ENCODE measurements at regions of chr7 and their contacts with region 1.

Region 1: DNA sequence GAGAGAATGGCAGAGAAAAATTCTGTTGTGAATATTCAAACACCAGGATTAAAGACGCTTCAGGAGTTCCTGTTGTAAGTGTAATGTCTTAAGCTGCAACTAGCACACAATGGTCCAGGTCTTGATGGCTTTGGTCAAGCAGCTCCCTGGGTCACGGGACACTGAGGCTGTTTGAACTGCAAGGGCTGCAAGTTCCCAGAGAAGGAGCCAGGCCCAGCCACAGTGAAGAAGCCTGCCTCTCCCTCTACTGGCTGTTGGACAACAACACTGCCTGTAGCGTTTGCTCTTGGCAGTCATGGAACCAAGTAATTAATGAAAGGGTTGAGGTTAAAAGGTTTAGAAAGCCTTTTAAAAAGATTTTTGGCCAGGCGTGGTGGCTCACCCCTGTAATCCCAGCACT is 31.9 kb upstream of the GUSB start:
- DNase-seq: peak; percentile 59
- H3K4me3 ChIP-seq: no peak overlapping the region
- H3K27ac ChIP-seq: no peak overlapping the region
- H3K4me1 ChIP-seq: no peaks in the 10 kb centered on the region
- H3K27me3 ChIP-seq: peaks cover 4 to 8% of the 10 kb centered on the region in 2 experiments
- CTCF ChIP-seq: peak; percentile 23 to 67
- POLR2A ChIP-seq: no peak

Region 2: GRCh38 chr7:65722345-65722792 is 291.5 kb before region 1 on chr7:
- CTCF ChIA-PET with region 1: interaction called, 9 read pairs
- POLR2A ChIA-PET with region 1: no interaction called
- dilution Hi-C with region 1: no loop called
- intact Hi-C with region 1: loop called (anchors 1 kb)
- DNase-seq: peak; percentile 28
- H3K4me3 ChIP-seq: no peak overlapping the region
- H3K27ac ChIP-seq: no peak overlapping the region
- H3K4me1 ChIP-seq: peaks cover 6% of the 10 kb centered on the region
- H3K27me3 ChIP-seq: no peaks in the 10 kb centered on the region
- CTCF ChIP-seq: peak; percentile 60 to 75
- POLR2A ChIP-seq: no peak

Region 3: DNA sequence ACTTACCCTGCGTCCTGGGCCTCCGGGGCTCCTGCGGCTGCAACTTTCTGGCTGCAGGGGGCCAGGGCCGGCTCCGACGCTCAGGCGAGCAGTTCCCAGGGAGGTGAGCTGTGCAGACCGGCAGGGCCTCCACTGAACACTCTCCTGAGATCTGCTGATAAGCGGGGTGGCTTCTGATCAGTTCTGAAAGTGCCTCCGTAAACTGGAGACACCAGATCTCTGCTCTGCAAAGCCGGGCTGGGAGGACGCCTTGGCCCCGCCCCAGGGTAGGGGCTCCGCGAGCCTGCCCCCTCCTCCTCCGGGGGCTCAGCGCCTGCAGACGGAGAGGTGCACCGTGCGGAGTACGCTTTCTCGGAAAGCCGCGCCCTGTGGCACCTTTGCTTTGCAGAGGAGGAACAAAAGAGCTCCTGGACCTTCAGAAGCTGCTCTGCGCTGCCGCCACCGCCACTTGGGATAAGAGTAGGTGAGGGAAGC is 282.3 kb before region 1 on chr7:
- CTCF ChIA-PET with region 1: interaction called, 7 read pairs
- POLR2A ChIA-PET with region 1: no interaction called
- dilution Hi-C with region 1: no loop called
- intact Hi-C with region 1: loop called (anchors 2 kb)
- DNase-seq: peak; percentile 59
- H3K4me3 ChIP-seq: peak overlapping the region; percentile 11 to 44 (median 33)
- H3K27ac ChIP-seq: no peak overlapping the region
- H3K4me1 ChIP-seq: peaks cover 4% of the 10 kb centered on the region
- H3K27me3 ChIP-seq: no peaks in the 10 kb centered on the region
- CTCF ChIP-seq: peak; percentile 39 to 63
- POLR2A ChIP-seq: no peak

Region 4: GRCh38 chr7:66227808-66228207 is 213.9 kb after region 1 on chr7:
- CTCF ChIA-PET with region 1: no interaction called
- POLR2A ChIA-PET with region 1: no interaction called
- dilution Hi-C with region 1: no loop called
- intact Hi-C with region 1: no loop called
- DNase-seq: no peak
- H3K4me3 ChIP-seq: no peak overlapping the region
- H3K27ac ChIP-seq: no peak overlapping the region
- H3K4me1 ChIP-seq: no peaks in the 10 kb centered on the region
- H3K27me3 ChIP-seq: no peaks in the 10 kb centered on the region
- CTCF ChIP-seq: no peak
- POLR2A ChIP-seq: no peak

Measured in endothelial cell of umbilical vein (primary cell).